Activated naive CD4-positive, alpha-beta T cell treated with anti-CD3 and anti-CD28 coated beads, Interleukin-2, amount 10 ng/mL, durations not matched to agents 7 days and 5 days (primary cell): ENCODE measurements at regions of chr18 and their contacts with region 1.

Region 1: DNA sequence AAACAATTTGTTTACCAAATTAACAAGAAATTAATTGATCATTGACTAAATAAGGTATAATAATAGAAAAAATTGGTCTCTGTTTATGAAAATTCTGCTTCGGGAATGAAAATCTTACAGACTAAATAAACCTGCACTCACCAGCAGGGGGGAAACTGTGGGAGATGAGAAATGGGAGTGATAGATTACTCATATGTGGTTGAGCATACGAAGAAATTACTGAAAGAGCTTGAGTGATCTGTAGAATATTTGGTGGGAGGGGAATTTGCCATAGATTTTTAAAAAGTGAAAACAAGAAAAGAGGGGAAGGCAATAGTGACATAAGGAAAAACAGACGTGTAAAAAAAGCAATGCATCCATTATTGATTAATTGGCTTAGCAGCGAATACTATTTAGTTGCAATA is 2.2 kb downstream of the HMSD start:
- DNase-seq: no peak
- H3K4me3 Mint-ChIP-seq: no peak overlapping the region
- H3K27ac Mint-ChIP-seq: no peak overlapping the region
- H3K4me1 Mint-ChIP-seq: peaks cover 27% of the 10 kb centered on the region
- H3K27me3 Mint-ChIP-seq: peaks cover 9% of the 10 kb centered on the region

Region 2: DNA sequence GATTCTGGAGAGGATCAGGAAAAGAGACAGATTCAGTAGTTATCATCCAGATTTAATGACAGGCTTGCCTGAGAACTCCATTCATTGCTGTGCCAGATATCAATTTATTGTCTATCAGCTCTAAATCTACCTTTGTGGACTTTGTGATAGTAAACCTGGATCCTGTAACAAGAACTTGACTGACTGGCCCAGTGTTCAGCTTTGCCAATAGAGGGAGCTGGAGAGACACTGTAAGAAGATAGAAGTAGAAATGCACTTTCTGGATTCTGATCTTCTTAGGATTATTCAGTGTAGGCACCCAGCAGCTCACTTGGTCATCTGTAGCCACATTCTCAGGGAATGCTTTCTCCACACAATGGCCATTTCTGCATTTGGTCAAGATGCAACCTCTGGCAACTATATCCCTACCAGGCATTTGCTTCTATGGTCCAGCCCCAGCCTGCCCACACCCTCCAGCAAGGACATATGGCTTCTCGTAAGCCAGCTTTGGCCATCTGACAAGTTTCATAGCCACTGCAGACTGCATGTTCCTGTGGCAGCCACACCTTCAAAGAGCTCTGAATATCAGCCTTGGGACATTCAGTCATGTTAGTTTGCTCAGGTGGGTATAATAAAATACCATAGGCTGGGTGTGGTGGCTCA is 12.4 kb after region 1 on chr18:
- CTCF ChIA-PET with region 1: interaction called, 26 read pairs
- DNase-seq: peak; percentile 66
- H3K4me3 Mint-ChIP-seq: no peak overlapping the region
- H3K27ac Mint-ChIP-seq: no peak overlapping the region
- H3K4me1 Mint-ChIP-seq: no peaks in the 10 kb centered on the region
- H3K27me3 Mint-ChIP-seq: peaks cover 12% of the 10 kb centered on the region